ENCODE measurements at regions of chr14 and their contacts with region 1.

Region 1: DNA sequence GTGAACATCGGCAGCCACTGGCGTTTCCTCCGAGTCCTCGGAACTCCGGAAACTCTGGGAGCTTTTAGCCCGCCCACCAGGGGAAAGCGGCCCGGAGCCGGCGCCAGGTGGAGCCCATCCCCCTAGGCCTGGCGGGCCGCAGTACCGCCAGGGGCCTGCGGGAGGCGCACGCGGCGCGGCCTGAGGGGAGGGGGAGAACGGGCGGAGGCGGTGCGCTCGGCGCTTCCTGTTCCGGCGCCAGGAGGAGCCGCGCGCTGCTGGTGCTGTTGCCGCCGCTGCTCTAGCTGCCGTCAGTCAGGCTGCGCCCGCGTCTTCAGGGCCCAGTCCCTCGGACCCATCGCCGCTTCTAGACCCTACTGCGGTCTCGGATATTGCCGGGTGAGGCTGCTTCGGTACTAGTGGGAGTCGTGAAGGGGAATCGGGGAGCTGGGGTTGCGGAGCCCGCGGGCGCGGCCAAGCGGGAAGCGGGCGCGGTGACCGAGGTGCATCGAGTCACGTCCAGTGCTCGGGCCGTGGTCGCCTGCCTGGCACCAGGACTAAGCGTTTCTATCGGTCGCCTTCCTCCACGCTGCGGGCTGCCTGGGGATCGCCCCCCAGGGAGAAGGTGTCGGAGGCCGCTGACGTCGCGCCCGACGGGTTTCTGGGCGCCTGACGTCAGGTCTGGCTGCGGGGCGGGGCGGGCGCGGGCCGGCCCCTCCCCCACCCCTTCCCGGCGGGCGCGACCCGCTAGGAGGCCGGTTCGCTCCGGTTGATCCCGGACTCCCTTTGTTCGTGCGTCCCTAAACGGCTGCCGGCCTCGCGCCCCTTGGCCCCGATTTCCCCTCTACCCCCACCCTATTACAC is at the start of gene MAPK1IP1L:
- DNase-seq: peak; percentile 95
- CTCF ChIP-seq: peak; percentile 100

Region 2: GRCh38 chr14:55038708-55039107 is 12.9 kb before region 1 on chr14:
- CTCF ChIA-PET with region 1: interaction called, 40 read pairs
- POLR2A ChIA-PET with region 1: interaction called, 4 read pairs
- DNase-seq: no peak
- CTCF ChIP-seq: no peak

Region 3: GRCh38 chr14:55071870-55072640 is 20.4 kb after region 1 on chr14:
- CTCF ChIA-PET with region 1: interaction called, 43 read pairs
- POLR2A ChIA-PET with region 1: interaction called, 6 read pairs
- DNase-seq: peak; percentile 49
- CTCF ChIP-seq: no peak

Region 4: GRCh38 chr14:55102141-55102621 is 50.5 kb after region 1 on chr14:
- CTCF ChIA-PET with region 1: interaction called, 11 read pairs
- POLR2A ChIA-PET with region 1: no interaction called
- DNase-seq: peak; percentile 77
- CTCF ChIP-seq: no peak